Left ventricle myocardium superior (tissue), 1 donor: ENCODE measurements at regions of chr20 and their contacts with region 1.

Region 1: GRCh38 chr20:5126512-5127203 is at the start of gene CDS2:
- DNase-seq: peak; percentile 100
- ATAC-seq: peak; percentile 95
- total RNA-seq, gene CDS2: 68.9 TPM

Region 2: DNA sequence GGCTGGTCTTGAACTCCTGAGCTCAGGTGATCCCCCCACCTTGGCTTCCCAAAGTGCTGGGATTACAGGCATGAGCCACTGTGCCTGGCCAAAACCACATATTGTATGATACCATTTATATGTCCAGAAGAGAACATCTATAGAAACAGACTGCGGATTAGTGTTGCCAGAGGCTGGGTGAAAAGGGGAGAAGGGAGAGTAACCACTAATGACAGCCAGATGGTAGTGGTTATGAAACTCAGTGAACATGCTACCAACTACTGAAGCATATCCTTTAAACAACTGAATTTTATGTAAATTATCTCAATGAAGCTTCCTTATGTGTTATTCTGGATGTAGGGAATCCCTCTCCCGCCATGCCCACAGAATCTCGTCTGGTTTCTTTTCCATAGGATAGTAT is 141.0 kb before region 1 on chr20:
- intact Hi-C with region 1: no loop called
- DNase-seq: no peak
- ATAC-seq: no peak

Region 3: GRCh38 chr20:5181956-5182355 is 55.3 kb after region 1 on chr20:
- intact Hi-C with region 1: no loop called
- DNase-seq: no peak
- ATAC-seq: peak; percentile 76

Region 4: GRCh38 chr20:5191829-5192569 is 65.3 kb after region 1 on chr20:
- intact Hi-C with region 1: loop called (anchors 5 kb)
- DNase-seq: no peak
- ATAC-seq: peak; percentile 61